Heart right ventricle (tissue), 16 donors: ENCODE measurements at regions of chr20 and their contacts with region 1.

Region 1: GRCh38 chr20:33992923-33993575 is 662 bp upstream of the RALY start:
- DNase-seq: peak; percentile 99 to 100
- ATAC-seq: peak; percentile 91 to 97 (median 96)
- H3K4me3 ChIP-seq: peak overlapping the region; percentile 77 to 98 (median 86)
- H3K27ac ChIP-seq: peak overlapping the region; percentile 95 to 99 (median 98)
- H3K4me1 ChIP-seq: peaks cover 14 to 52% (median 42%) of the 10 kb centered on the region in 9 donors
- H3K27me3 ChIP-seq: no peaks in the 10 kb centered on the region
- CTCF ChIP-seq: no peak

Region 2: GRCh38 chr20:33731693-33732165 is 261.3 kb before region 1 on chr20 and contains the start of gene ZNF341:
- intact Hi-C with region 1: loop called in 1 of 10 experiments (anchors 10 kb)
- DNase-seq: peak; percentile 88 to 91
- ATAC-seq: peak; percentile 83 to 91 (median 88)
- H3K4me3 ChIP-seq: peak within 1 kb of the TSS; percentile 33 to 81 (median 68)
- H3K27ac ChIP-seq: peak within 1 kb of the TSS; percentile 90 to 98 (median 95)
- H3K4me1 ChIP-seq: peaks cover 3 to 31% (median 23%) of the 10 kb centered on the region in 9 donors
- H3K27me3 ChIP-seq: no peaks in the 10 kb centered on the region
- CTCF ChIP-seq: peak; percentile 88 to 93 (median 91)
- total RNA-seq, gene ZNF341: 0.85 to 2.6 (median 1.5) TPM

Region 3: GRCh38 chr20:33810885-33811777 is 181.9 kb before region 1 on chr20 and contains the start of gene CHMP4B:
- intact Hi-C with region 1: loop called in 2 of 10 experiments (anchors 1 to 5 kb)
- DNase-seq: peak; percentile 99 to 100
- ATAC-seq: peak; percentile 98 to 100 (median 99)
- H3K4me3 ChIP-seq: peak within 1 kb of the TSS; percentile 76 to 97 (median 96)
- H3K27ac ChIP-seq: peak within 1 kb of the TSS; percentile 87 to 99 (median 94)
- H3K4me1 ChIP-seq: peaks cover 4 to 54% (median 43%) of the 10 kb centered on the region in 9 donors
- H3K27me3 ChIP-seq: no peaks in the 10 kb centered on the region
- CTCF ChIP-seq: no peak
- total RNA-seq, gene CHMP4B: 88.3 to 137 (median 103) TPM

Region 4: GRCh38 chr20:34045294-34045693 is 52.2 kb after region 1 on chr20:
- intact Hi-C with region 1: loop called in 4 of 10 experiments (anchors 2 to 10 kb)
- DNase-seq: peak in 1 of 2 donors; percentile 70
- ATAC-seq: peak; percentile 63 to 78 (median 72)
- H3K4me3 ChIP-seq: no peak overlapping the region
- H3K27ac ChIP-seq: peak overlapping the region in 2 of 10 donors; percentile 3 to 9
- H3K4me1 ChIP-seq: peaks cover 24 to 87% (median 76%) of the 10 kb centered on the region in 9 donors
- H3K27me3 ChIP-seq: no peaks in the 10 kb centered on the region
- CTCF ChIP-seq: no peak

Region 5: DNA sequence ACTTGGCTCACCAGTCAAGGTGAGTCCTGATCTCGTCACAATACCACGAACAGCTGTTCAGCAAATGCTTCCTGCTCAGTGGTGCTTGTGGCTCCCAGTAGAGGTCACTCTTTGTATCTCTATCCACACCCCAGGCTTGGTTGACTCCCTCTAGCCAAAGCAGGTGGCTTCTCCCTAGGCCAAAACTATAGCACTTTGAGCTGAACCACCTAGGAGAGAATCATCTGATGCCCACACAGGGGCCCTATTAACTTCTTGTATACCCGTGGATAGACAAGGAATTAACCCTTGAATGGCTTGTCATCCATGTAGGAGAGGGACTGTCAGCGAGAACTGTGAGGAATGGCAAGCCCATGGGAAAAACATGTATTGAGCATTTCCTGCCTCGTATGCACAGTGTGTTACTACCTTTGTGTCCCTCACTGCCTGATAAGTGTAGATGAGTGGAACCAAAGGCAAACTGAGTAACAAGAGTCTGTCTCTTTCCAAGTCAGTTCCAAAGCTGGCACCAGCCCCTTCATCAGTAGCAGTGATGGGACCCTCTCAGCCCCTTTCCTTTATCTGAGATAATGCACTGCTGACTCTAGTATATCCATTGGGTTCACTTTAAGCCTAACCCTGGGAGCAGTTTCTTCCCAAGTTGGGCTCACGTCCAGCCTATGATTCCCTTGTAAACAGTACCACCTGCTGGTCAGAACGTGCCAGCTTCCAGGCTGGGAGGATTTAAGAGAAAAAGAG is 76.5 kb after region 1 on chr20:
- intact Hi-C with region 1: loop called in 8 of 10 experiments (anchors 2 to 10 kb)
- DNase-seq: peak; percentile 48 to 75
- ATAC-seq: peak; percentile 86 to 93 (median 88)
- H3K4me3 ChIP-seq: no peak overlapping the region
- H3K27ac ChIP-seq: peak overlapping the region in 2 of 10 donors; percentile 4 to 54
- H3K4me1 ChIP-seq: peaks cover 14 to 53% (median 38%) of the 10 kb centered on the region in 9 donors
- H3K27me3 ChIP-seq: no peaks in the 10 kb centered on the region
- CTCF ChIP-seq: peak; percentile 57 to 93 (median 87)